SK-N-SH (cell line): ENCODE measurements at regions of chr7 and their contacts with region 1.

Region 1: DNA sequence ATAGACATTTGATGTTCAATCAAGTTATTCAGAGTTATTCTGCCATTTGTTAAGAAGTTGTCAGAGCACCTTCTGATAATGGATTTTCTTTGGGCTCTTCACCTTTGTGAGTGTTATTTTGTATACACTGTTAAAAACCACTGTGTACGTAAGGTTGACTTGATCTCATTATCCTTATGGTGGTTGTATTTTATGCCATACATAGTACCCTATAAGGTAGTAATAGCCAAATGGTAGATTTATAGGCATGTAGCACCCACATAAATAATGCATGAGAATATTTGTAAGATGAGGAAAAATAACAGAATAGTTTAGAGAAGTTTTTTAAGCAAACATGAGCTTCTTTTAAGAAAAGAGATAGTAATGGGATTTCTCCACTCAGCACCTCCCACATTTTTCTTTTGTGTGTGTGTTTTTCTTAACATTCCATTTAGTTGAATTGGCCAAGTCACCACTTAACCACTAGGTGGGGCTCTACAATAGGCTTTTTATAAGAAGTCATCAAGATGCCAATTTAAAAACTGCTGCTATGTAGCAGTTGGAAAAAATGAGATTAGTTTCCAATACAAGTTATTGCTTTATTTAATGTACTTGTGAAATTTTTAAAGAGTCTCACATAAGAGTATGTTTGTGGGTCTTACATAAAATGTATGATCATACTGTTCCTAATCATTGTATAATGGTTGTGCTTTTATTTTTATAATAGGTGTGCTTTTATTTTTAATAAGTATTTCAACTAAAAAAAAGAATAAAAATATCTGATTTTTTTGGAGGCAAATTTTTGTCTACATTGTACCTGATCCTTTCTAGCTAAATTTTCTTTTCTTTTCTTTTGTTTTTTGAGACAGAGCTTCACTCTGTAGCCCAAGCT is 41.1 kb upstream of the STMP1 start:
- DNase-seq: peak; percentile 66
- H3K4me3 ChIP-seq: no peak overlapping the region
- H3K27ac ChIP-seq: peak overlapping the region; percentile 23 to 69; a peak in 3 of 4 replicates
- H3K4me1 ChIP-seq: peaks cover 0 to 9% of the 10 kb centered on the region in 2 experiments; a peak in 2 of 4 replicates
- H3K27me3 ChIP-seq: no peaks in the 10 kb centered on the region
- CTCF ChIP-seq: peak; percentile 99
- EP300 ChIP-seq: peak in 1 of 2 experiments; percentile 34; a peak in 1 of 4 replicates
- RAD21 ChIP-seq: peak; percentile 80

Region 2: GRCh38 chr7:135206941-135207391 is 414.2 kb before region 1 on chr7:
- CTCF ChIA-PET with region 1: no interaction called
- POLR2A ChIA-PET with region 1: no interaction called
- DNase-seq: no peak
- H3K4me3 ChIP-seq: no peak overlapping the region
- H3K27ac ChIP-seq: no peak overlapping the region
- H3K4me1 ChIP-seq: peaks cover 0 to 6% of the 10 kb centered on the region in 2 experiments; a peak in 2 of 4 replicates
- H3K27me3 ChIP-seq: no peaks in the 10 kb centered on the region
- CTCF ChIP-seq: no peak
- EP300 ChIP-seq: no peak
- RAD21 ChIP-seq: no peak

Region 3: DNA sequence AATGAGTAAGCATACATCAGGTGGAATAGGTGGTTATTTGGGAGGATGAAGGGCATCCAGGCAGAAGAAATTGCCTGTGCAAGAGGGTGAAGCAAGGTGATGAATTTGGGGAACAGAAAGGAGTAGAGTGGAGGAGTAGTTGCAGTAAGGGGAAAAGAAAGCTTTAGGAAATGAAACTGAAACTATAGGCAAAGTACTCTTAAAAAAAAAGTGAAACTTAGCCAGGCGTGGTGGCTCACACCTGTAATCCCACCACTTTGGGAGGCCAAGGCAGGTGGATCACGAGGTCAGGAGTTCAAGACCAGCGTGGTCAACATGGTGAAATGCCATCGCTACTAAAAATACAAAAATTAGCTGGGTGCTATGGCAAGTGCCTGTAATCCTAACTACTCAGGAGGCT is 45.9 kb before region 1 on chr7:
- CTCF ChIA-PET with region 1: interaction called, 12 read pairs
- POLR2A ChIA-PET with region 1: no interaction called
- DNase-seq: no peak
- H3K4me3 ChIP-seq: no peak overlapping the region
- H3K27ac ChIP-seq: no peak overlapping the region
- H3K4me1 ChIP-seq: no peaks in the 10 kb centered on the region
- H3K27me3 ChIP-seq: no peaks in the 10 kb centered on the region
- CTCF ChIP-seq: no peak
- EP300 ChIP-seq: no peak
- RAD21 ChIP-seq: no peak

Region 4: DNA sequence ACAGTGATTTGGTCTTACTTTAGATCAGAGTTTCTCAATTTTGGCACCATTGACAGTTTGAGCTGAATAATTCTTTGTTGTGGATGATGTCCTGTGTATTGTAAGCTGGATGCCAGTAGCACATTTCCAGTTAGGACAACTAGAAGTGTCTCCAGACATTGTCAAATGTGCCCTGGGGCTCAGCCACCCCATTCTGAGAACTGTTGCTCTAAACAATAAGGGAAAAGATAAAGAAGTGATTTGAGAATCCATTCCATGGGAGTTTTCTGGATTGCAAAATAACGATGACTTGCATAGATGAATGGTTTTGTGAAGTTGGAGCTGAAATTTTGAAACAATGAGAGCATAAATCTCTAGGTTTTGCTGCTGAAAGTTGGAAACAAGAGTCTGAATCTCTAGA is 18.9 kb before region 1 on chr7:
- CTCF ChIA-PET with region 1: interaction called, 79 read pairs
- POLR2A ChIA-PET with region 1: no interaction called
- DNase-seq: no peak
- H3K4me3 ChIP-seq: no peak overlapping the region
- H3K27ac ChIP-seq: peak overlapping the region in 1 of 2 experiments; percentile 96; a peak in 2 of 4 replicates
- H3K4me1 ChIP-seq: peaks cover 11 to 21% of the 10 kb centered on the region in 2 experiments
- H3K27me3 ChIP-seq: no peaks in the 10 kb centered on the region
- CTCF ChIP-seq: no peak
- EP300 ChIP-seq: no peak
- RAD21 ChIP-seq: no peak

Region 5: GRCh38 chr7:135634191-135634878 is 13.1 kb after region 1 on chr7:
- CTCF ChIA-PET with region 1: interaction called, 63 read pairs
- POLR2A ChIA-PET with region 1: no interaction called
- DNase-seq: no peak
- H3K4me3 ChIP-seq: no peak overlapping the region
- H3K27ac ChIP-seq: no peak overlapping the region
- H3K4me1 ChIP-seq: no peaks in the 10 kb centered on the region
- H3K27me3 ChIP-seq: no peaks in the 10 kb centered on the region
- CTCF ChIP-seq: no peak
- EP300 ChIP-seq: no peak
- RAD21 ChIP-seq: no peak

Region 6: GRCh38 chr7:135662373-135663114 is 41.3 kb after region 1 on chr7 and contains the start of gene STMP1:
- CTCF ChIA-PET with region 1: interaction called, 11 read pairs
- POLR2A ChIA-PET with region 1: no interaction called
- DNase-seq: peak; percentile 100
- H3K4me3 ChIP-seq: peak within 1 kb of the TSS; percentile 73 to 96
- H3K27ac ChIP-seq: peak within 1 kb of the TSS; percentile 92 to 97
- H3K4me1 ChIP-seq: peaks cover 10 to 11% of the 10 kb centered on the region in 2 experiments
- H3K27me3 ChIP-seq: no peaks in the 10 kb centered on the region
- CTCF ChIP-seq: no peak
- EP300 ChIP-seq: peak; percentile 20 to 40; a peak in 2 of 4 replicates
- RAD21 ChIP-seq: peak; percentile 62
- polyA plus RNA-seq, gene STMP1: 26.0 and 30.0 TPM in 2 replicates

Region 7: GRCh38 chr7:135710417-135711138 is 89.4 kb after region 1 on chr7:
- CTCF ChIA-PET with region 1: no interaction called
- POLR2A ChIA-PET with region 1: no interaction called
- DNase-seq: peak; percentile 83
- H3K4me3 ChIP-seq: no peak overlapping the region
- H3K27ac ChIP-seq: peak overlapping the region in 1 of 2 experiments; percentile 93; a peak in 1 of 4 replicates
- H3K4me1 ChIP-seq: peaks cover 25 to 41% of the 10 kb centered on the region in 2 experiments
- H3K27me3 ChIP-seq: no peaks in the 10 kb centered on the region
- CTCF ChIP-seq: peak; percentile 64
- EP300 ChIP-seq: no peak
- RAD21 ChIP-seq: no peak

Region 8: GRCh38 chr7:135825406-135825805 is 204.2 kb after region 1 on chr7:
- CTCF ChIA-PET with region 1: no interaction called
- POLR2A ChIA-PET with region 1: no interaction called
- DNase-seq: no peak
- H3K4me3 ChIP-seq: no peak overlapping the region
- H3K27ac ChIP-seq: no peak overlapping the region
- H3K4me1 ChIP-seq: no peaks in the 10 kb centered on the region; a peak in 1 of 4 replicates
- H3K27me3 ChIP-seq: peaks cover under 1% of the 10 kb centered on the region; the same call in 1 of the 2 replicates
- CTCF ChIP-seq: no peak
- EP300 ChIP-seq: no peak
- RAD21 ChIP-seq: no peak